Heart left ventricle (tissue), 16 donors: ENCODE measurements at regions of chr18 and their contacts with region 1.

Region 1: GRCh38 chr18:55589625-55590291 is 1.8 kb upstream of the TCF4 start:
- DNase-seq: peak; percentile 97 to 98 (median 98)
- ATAC-seq: peak; percentile 96 to 99 (median 98)
- H3K4me3 ChIP-seq: peak overlapping the region; percentile 63 to 82 (median 74)
- H3K27ac ChIP-seq: peak overlapping the region; percentile 80 to 92 (median 87)
- H3K4me1 ChIP-seq: peaks cover 0 to 23% (median 6%) of the 10 kb centered on the region in 12 donors
- H3K27me3 ChIP-seq: no peaks in the 10 kb centered on the region
- CTCF ChIP-seq: peak in 5 of 12 donors; percentile 6 to 41 (median 25)
- POLR2A ChIP-seq: peak in 1 of 2 donors; percentile 57

Region 2: GRCh38 chr18:55322178-55322735 is 267.5 kb before region 1 on chr18:
- intact Hi-C with region 1: loop called in 5 of 10 experiments (anchors 2 to 10 kb)
- DNase-seq: peak; percentile 87 to 94 (median 89)
- ATAC-seq: peak; percentile 76 to 90 (median 87)
- H3K4me3 ChIP-seq: peak overlapping the region; percentile 49 to 79 (median 66)
- H3K27ac ChIP-seq: peak overlapping the region; percentile 83 to 99 (median 94)
- H3K4me1 ChIP-seq: peaks cover 0 to 44% (median 31%) of the 10 kb centered on the region in 12 donors
- H3K27me3 ChIP-seq: no peaks in the 10 kb centered on the region
- CTCF ChIP-seq: peak in 7 of 12 donors; percentile 12 to 48 (median 33)
- POLR2A ChIP-seq: peak in 1 of 2 donors; percentile 75

Region 3: GRCh38 chr18:55405893-55406406 is 183.8 kb before region 1 on chr18:
- intact Hi-C with region 1: loop called in 1 of 10 experiments (anchors 5 kb)
- DNase-seq: peak; percentile 87 to 93 (median 92)
- ATAC-seq: peak; percentile 83 to 91 (median 88)
- H3K4me3 ChIP-seq: peak overlapping the region in 1 of 12 donors; percentile 3
- H3K27ac ChIP-seq: peak overlapping the region; percentile 50 to 86 (median 80)
- H3K4me1 ChIP-seq: peaks cover 0 to 55% (median 20%) of the 10 kb centered on the region in 12 donors
- H3K27me3 ChIP-seq: no peaks in the 10 kb centered on the region
- CTCF ChIP-seq: peak in 5 of 12 donors; percentile 5 to 35 (median 22)
- POLR2A ChIP-seq: no peak

Region 4: DNA sequence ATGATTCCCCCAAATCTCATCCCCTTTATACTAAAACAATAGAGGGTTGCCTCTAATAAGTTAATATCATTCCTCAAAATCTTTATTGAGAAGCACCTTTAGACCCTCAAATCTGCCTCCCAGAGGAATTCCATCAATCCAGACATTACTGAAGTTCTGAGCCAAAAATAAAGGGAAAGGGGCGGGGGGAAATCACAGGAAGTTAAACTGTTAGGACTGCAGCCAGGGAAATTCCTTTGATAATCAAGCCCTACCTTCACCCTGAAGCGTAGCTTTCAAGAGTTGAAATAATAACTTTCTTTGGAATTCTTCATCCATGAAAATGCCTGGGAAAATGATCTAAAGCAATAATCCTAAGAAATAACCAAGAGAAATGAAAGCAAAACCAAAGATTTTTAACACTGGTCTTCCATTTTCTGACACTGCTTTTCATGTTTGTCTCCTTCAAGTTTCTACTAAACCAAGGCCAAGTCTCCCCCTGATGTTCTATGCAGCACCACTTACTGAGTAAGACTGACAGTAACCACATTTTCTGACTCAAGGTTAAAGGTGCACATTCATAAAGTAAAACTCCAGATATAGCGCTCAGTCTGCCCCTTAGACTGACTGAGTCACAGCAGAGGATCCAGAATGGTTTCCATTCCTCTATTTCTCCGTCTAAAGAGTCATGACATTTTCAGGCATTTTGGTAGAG is 80.0 kb before region 1 on chr18:
- intact Hi-C with region 1: loop called in 5 of 10 experiments (anchors 2 to 5 kb)
- DNase-seq: peak in 2 of 5 donors; percentile 40 to 63
- ATAC-seq: peak in 2 of 4 donors; percentile 45 to 64
- H3K4me3 ChIP-seq: peak overlapping the region in 11 of 12 donors; percentile 1 to 50 (median 34)
- H3K27ac ChIP-seq: peak overlapping the region; percentile 52 to 94 (median 86)
- H3K4me1 ChIP-seq: peaks cover 0 to 55% (median 18%) of the 10 kb centered on the region in 12 donors
- H3K27me3 ChIP-seq: no peaks in the 10 kb centered on the region
- CTCF ChIP-seq: no peak
- POLR2A ChIP-seq: no peak

Region 5: DNA sequence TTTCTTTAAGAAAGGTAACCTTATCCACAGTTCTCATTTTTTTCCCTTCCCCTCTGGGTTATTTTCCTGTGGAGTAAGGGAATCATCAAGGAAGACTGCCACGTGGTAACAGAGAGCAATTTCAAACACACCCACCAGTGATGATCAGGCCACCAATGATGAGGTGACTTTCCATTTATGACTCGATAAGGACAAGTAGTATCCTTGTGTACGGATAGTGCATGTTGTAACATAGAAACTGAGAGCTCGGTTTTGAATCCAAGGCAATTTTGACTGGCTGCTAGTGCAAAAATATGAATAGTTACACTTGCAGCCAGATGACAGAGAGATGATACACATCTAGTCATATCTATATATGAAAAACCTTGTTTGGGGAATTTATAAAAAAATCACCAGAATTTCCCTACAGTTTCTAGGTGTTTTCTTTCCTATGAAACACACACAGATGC is 141.9 kb after region 1 on chr18:
- intact Hi-C with region 1: loop called in 1 of 10 experiments (anchors 5 kb)
- DNase-seq: no peak
- ATAC-seq: peak in 2 of 4 donors; percentile 43 to 51
- H3K4me3 ChIP-seq: no peak overlapping the region
- H3K27ac ChIP-seq: peak overlapping the region; percentile 12 to 81 (median 58)
- H3K4me1 ChIP-seq: peaks cover 0 to 19% (median 8%) of the 10 kb centered on the region in 12 donors
- H3K27me3 ChIP-seq: no peaks in the 10 kb centered on the region
- CTCF ChIP-seq: no peak
- POLR2A ChIP-seq: no peak

Region 6: GRCh38 chr18:56083097-56083521 is 493.4 kb after region 1 on chr18:
- intact Hi-C with region 1: loop called in 1 of 10 experiments (anchors 5 kb)
- DNase-seq: peak; percentile 66 to 89 (median 77)
- ATAC-seq: peak; percentile 73 to 91 (median 80)
- H3K4me3 ChIP-seq: no peak overlapping the region
- H3K27ac ChIP-seq: peak overlapping the region in 10 of 12 donors; percentile 16 to 81 (median 68)
- H3K4me1 ChIP-seq: peaks cover 0 to 35% (median 21%) of the 10 kb centered on the region in 12 donors
- H3K27me3 ChIP-seq: no peaks in the 10 kb centered on the region
- CTCF ChIP-seq: peak in 10 of 12 donors; percentile 7 to 58 (median 29)
- POLR2A ChIP-seq: no peak